PC-9 (cell line): ENCODE measurements at regions of chr19 and their contacts with region 1.

Region 1: DNA sequence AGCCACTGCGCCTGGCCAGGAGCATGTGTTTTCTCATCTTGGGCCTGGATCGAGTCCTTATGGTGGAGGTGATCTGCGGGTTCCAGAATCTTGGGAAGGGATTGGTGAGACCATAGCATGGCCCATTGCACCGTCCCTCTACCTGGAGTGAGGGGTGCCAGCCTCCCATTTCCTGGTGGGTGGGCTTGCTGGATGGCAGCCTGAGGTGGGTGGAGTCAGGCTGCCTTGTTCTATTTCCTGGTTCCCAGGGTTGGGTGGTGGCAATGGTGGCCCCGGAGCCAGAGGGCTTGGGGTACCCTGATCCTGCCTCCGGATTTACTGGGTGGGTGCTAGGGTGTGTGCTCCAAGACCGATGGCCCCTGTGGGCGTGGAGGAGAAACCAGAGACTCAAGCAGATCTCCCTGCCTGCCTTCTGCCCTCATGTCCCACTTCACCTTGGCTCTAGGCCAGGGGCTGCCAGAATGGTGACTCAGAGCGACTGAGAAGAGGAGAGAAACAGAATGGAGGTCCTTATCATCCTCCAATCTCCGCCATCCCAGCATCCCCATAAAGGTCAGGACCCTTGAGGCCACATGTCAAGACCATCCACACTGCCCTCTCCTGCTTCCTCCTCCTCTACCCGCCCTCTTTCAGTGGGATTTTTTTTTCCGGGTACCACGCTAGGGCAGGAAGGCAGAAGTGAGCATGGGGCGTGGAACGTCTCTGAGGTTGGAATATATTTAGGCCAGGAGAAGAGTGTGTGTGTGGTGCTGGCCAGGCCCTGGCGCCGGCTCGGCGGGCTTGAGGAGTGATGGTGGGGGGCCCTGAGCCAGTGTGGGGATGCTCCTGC is 22.1 kb downstream of the IER2 start:
- DNase-seq: peak; percentile 95 to 97
- H3K4me3 ChIP-seq: no peak overlapping the region; the same call in 1 of the 2 replicates
- H3K27ac ChIP-seq: peak overlapping the region; percentile 99
- H3K4me1 ChIP-seq: peaks cover 63% of the 10 kb centered on the region
- H3K27me3 ChIP-seq: no peaks in the 10 kb centered on the region
- CTCF ChIP-seq: no peak

Region 2: DNA sequence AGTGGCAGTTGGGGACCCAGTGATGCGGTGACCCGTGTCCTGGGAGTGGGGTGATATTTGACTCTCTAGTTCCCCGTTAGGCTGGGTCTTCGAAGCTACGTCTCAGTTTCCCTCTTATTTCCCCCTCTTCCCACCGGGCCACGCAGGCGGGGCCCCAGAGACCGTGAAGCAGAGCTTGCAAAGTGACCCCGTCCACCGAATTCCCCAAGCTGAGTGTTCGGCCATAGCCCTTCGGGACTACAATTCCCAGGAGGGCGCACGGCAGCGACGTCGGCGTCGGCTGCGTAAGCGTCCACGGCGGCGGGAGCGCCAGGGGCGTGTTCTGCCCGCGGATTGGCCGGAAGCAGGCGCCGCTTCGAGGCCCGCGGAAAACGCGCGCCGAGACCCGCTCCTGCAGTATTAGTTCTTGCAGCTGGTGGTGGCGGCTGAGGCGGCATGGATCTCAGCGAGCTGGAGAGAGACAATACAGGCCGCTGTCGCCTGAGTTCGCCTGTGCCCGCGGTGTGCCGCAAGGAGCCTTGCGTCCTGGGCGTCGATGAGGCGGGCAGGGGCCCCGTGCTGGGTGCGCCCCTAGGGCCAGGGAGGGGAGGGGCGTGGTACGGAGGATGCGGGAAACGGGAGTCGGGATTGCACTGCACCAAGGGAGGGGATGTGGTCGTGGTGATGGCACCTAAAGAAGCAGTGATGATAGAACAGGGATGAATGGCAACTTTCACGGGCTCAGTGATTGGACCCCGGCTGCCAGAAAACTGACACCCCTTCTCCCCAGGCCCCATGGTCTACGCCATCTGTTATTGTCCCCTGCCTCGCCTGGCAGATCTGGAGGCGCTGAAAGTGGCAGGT is 365.8 kb before region 1 on chr19 and contains the start of gene RNASEH2A:
- CTCF ChIA-PET with region 1: no interaction called
- POLR2A ChIA-PET with region 1: interaction called, 10 read pairs
- intact Hi-C with region 1: no loop called
- DNase-seq: peak; percentile 81 to 85
- H3K4me3 ChIP-seq: peak within 1 kb of the TSS; percentile 91
- H3K27ac ChIP-seq: no peak within 1 kb of the TSS
- H3K4me1 ChIP-seq: peaks cover 21% of the 10 kb centered on the region; the same call in 1 of the 2 replicates
- H3K27me3 ChIP-seq: no peaks in the 10 kb centered on the region
- CTCF ChIP-seq: no peak
- total RNA-seq, gene RNASEH2A: 38.6 and 60.4 TPM in 2 replicates

Region 3: GRCh38 chr19:13269348-13269747 is 97.1 kb after region 1 on chr19:
- CTCF ChIA-PET with region 1: interaction called, 11 read pairs
- POLR2A ChIA-PET with region 1: no interaction called
- intact Hi-C with region 1: no loop called
- DNase-seq: no peak
- H3K4me3 ChIP-seq: no peak overlapping the region
- H3K27ac ChIP-seq: no peak overlapping the region
- H3K4me1 ChIP-seq: no peaks in the 10 kb centered on the region
- H3K27me3 ChIP-seq: no peaks in the 10 kb centered on the region
- CTCF ChIP-seq: no peak

Region 4: DNA sequence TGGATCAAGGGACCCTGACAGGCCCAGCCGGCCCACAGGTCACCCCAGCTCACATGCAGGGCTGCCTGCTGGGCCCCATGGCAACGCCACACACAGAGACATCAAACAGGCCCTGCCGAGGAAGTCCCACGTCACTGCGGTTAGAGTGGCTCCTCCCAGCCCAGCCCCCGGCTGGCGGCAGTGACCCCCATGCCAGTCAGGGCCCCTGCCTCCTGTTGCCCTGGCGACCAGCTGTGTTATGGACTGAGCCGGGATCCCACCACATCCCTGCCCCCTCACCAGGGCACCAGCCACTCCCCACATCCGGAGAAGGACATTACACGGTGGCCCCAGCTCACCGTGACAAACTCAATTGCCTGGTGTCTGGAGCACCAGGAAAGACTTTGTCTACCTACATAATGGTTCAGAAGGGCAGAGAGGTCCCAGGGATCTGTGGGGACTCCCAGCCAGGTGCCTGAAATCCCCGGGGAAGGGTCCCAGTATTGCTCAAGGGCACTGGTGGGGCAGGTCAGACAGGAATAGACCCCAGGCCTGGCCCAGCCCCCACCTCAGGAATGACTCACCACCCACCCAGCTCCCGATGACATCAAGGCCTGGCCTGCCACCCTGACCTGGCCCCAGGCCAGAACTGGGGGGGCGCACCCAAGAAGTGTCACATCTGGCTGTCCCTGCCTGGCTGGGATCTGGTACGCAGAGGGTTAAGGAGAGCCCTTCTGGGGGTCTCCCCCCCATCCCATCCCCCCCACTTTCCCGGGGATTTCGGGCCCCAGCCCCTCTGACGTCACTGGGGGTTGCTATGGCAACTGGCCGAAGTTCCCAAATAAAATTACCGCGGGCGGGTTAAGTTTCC is 674.5 kb after region 1 on chr19:
- CTCF ChIA-PET with region 1: no interaction called
- POLR2A ChIA-PET with region 1: no interaction called
- intact Hi-C with region 1: loop called (anchors 5 kb)
- DNase-seq: peak; percentile 93 to 97
- H3K4me3 ChIP-seq: peak overlapping the region; percentile 77
- H3K27ac ChIP-seq: peak overlapping the region; percentile 97
- H3K4me1 ChIP-seq: peaks cover 70% of the 10 kb centered on the region
- H3K27me3 ChIP-seq: no peaks in the 10 kb centered on the region
- CTCF ChIP-seq: no peak